PC-3 (cell line): ENCODE measurements at regions of chr5 and their contacts with region 1.

Region 1: DNA sequence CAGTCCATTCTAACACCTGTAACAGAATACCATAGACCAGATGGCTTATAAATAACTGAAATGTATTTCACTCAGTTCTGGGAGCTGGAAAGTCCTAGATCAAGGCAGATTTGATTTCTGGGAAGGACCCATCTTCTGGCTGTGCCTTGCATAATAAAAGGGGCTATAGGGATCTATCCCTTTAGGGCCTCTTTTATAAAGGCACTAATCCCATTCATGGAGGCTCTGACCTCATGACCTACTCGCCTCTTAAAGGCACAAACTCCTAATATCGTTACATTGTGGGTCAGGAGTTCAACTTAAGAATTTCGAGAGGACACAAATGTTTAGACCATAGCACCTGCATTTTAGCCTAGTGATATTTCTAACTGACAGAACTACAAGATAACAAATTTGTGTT is 619.0 kb downstream of the CDH18 start:
- DNase-seq: no peak
- ATAC-seq: no peak
- H3K4me3 ChIP-seq: no peak overlapping the region
- H3K27ac ChIP-seq: no peak overlapping the region
- H3K4me1 ChIP-seq: peaks cover 13% of the 10 kb centered on the region
- H3K27me3 ChIP-seq: no peaks in the 10 kb centered on the region
- CTCF ChIP-seq: no peak

Region 2: GRCh38 chr5:19240170-19240569 is 128.9 kb before region 1 on chr5:
- CTCF ChIA-PET with region 1: no interaction called
- POLR2A ChIA-PET with region 1: no interaction called
- intact Hi-C with region 1: loop called (anchors 5 kb)
- DNase-seq: peak; percentile 89
- ATAC-seq: peak; percentile 93
- H3K4me3 ChIP-seq: no peak overlapping the region
- H3K27ac ChIP-seq: no peak overlapping the region
- H3K4me1 ChIP-seq: peaks cover 26% of the 10 kb centered on the region
- H3K27me3 ChIP-seq: no peaks in the 10 kb centered on the region
- CTCF ChIP-seq: no peak

Region 3: DNA sequence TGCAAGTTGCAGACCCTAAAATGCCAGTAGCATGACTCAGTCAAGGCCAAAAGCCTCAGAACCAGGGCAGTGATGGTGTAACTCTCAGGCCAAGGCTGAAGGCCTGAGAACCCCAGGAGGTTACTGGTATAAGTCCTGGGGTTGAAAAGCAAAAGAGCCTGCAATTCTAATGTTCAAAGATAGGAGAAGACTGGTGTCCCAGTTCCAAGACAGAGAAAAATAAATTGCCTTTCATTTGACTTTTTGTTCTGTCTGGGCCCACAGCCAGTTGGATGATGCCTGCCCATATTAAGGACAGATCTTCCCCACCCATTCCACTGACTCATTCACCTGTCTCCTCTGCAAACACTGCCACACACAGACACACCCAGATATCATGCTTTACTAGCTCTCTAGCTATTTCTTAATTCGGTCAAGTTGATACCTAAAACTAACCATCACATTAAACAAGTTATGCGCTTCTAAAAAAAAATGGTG is 54.2 kb before region 1 on chr5:
- CTCF ChIA-PET with region 1: no interaction called
- POLR2A ChIA-PET with region 1: no interaction called
- intact Hi-C with region 1: loop called (anchors 2 kb)
- DNase-seq: peak; percentile 97
- ATAC-seq: peak; percentile 98
- H3K4me3 ChIP-seq: no peak overlapping the region
- H3K27ac ChIP-seq: peak overlapping the region; percentile 62
- H3K4me1 ChIP-seq: peaks cover 20% of the 10 kb centered on the region
- H3K27me3 ChIP-seq: no peaks in the 10 kb centered on the region
- CTCF ChIP-seq: peak; percentile 54